Activated naive CD4-positive, alpha-beta T cell treated with anti-CD3 and anti-CD28 coated beads for 36 hours (primary cell): ENCODE measurements at regions of chr11 and their contacts with region 1.

Region 1: GRCh38 chr11:33065445-33066178 is 26.2 kb downstream of the TCP11L1 start:
- DNase-seq: peak; percentile 86
- H3K4me3 Mint-ChIP-seq: no peak overlapping the region
- H3K27ac Mint-ChIP-seq: no peak overlapping the region
- H3K4me1 Mint-ChIP-seq: peaks cover 41% of the 10 kb centered on the region
- H3K27me3 Mint-ChIP-seq: peaks cover 1% of the 10 kb centered on the region

Region 2: GRCh38 chr11:32713496-32713895 is 352.1 kb before region 1 on chr11:
- CTCF ChIA-PET with region 1: interaction called, 4 read pairs
- intact Hi-C with region 1: loop called (anchors 1 kb)
- DNase-seq: peak; percentile 23
- H3K4me3 Mint-ChIP-seq: no peak overlapping the region
- H3K27ac Mint-ChIP-seq: no peak overlapping the region
- H3K4me1 Mint-ChIP-seq: no peaks in the 10 kb centered on the region
- H3K27me3 Mint-ChIP-seq: peaks cover 22% of the 10 kb centered on the region

Region 3: DNA sequence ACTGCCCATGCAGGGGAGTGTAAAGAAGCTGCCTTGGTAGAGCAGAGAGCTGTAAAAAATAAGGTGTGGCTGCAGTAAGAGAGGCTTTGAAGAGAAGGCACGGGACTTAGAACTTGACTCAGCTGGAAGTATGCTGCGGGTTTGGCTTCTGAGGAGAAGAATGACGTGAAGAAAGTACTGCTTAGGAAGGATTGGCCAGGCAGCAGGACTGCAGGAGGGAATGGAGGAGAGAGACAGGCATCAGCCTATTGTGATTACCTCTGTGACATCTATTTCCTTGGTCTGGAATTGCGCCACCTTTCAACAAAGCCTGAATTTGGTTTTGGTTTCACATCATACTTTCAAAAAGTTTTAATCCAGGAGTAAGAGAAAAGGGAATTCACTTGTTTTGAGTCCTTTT is 213.4 kb before region 1 on chr11:
- CTCF ChIA-PET with region 1: no interaction called
- intact Hi-C with region 1: no loop called
- DNase-seq: no peak
- H3K4me3 Mint-ChIP-seq: no peak overlapping the region
- H3K27ac Mint-ChIP-seq: no peak overlapping the region
- H3K4me1 Mint-ChIP-seq: peaks cover 5% of the 10 kb centered on the region
- H3K27me3 Mint-ChIP-seq: peaks cover 7% of the 10 kb centered on the region

Region 4: DNA sequence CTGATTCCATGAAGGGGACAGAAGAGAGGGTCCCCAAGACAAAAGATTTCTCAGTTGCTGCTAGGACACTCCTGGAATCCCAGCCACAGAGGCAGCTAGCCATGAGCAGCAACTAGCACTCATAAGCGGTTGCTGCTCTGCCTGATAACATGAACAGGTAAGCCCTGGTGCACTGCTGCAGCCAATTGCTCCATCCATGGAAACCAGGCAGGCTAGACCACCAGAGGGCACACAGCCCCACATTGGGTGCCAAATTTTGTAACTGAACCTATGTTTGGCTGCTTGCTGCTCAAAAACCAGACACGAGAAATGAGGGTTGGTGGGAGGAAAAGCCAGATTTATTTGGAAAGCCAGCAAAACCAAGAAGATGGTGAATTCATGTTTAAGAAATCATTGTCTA is 194.9 kb before region 1 on chr11:
- CTCF ChIA-PET with region 1: no interaction called
- intact Hi-C with region 1: loop called (anchors 1 kb)
- DNase-seq: peak; percentile 46
- H3K4me3 Mint-ChIP-seq: no peak overlapping the region
- H3K27ac Mint-ChIP-seq: no peak overlapping the region
- H3K4me1 Mint-ChIP-seq: no peaks in the 10 kb centered on the region
- H3K27me3 Mint-ChIP-seq: peaks cover 7% of the 10 kb centered on the region

Region 5: DNA sequence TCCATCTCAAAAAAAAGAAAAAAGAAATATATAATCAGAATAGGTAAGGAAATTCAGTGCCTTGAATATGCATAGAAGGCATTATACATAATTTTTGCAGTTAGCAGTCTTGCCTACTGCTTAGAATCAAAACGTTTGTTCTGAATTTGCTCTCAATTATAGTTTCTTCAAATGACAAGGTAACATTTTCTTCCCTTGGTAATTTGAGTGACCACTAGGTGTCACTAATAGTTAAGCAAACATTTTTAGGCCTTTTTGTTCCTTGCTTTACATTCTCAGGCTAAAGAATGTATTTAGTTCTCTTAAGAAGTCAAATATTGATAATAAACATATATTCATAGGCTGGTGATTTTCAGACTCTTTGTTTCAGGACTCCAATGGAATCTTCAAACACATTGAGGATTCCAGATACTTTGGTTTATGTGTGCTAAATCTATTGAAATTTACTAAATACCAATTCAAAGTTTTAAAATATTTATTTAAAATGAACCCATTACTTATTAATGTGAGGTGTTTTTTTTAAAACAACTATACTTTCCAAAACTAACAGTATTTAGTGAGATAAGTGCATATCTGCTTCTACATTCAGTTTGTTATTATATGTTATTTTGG is 105.0 kb before region 1 on chr11:
- CTCF ChIA-PET with region 1: interaction called, 39 read pairs
- intact Hi-C with region 1: loop called (anchors 1 kb)
- DNase-seq: no peak
- H3K4me3 Mint-ChIP-seq: no peak overlapping the region
- H3K27ac Mint-ChIP-seq: no peak overlapping the region
- H3K4me1 Mint-ChIP-seq: peaks cover 8% of the 10 kb centered on the region
- H3K27me3 Mint-ChIP-seq: no peaks in the 10 kb centered on the region

Region 6: GRCh38 chr11:33039274-33040032 is 26.2 kb before region 1 on chr11 and contains the start of gene TCP11L1:
- CTCF ChIA-PET with region 1: interaction called, 13 read pairs
- intact Hi-C with region 1: loop called (anchors 1 kb)
- DNase-seq: peak; percentile 88
- H3K4me3 Mint-ChIP-seq: peak within 1 kb of the TSS; percentile 85
- H3K27ac Mint-ChIP-seq: peak within 1 kb of the TSS; percentile 92
- H3K4me1 Mint-ChIP-seq: peaks cover 25% of the 10 kb centered on the region
- H3K27me3 Mint-ChIP-seq: no peaks in the 10 kb centered on the region
- total RNA-seq, gene TCP11L1: 4.8 to 5.7 TPM

Region 7: GRCh38 chr11:33329705-33330329 is 264.2 kb after region 1 on chr11:
- CTCF ChIA-PET with region 1: no interaction called
- intact Hi-C with region 1: loop called (anchors 2 kb)
- DNase-seq: peak; percentile 66
- H3K4me3 Mint-ChIP-seq: no peak overlapping the region
- H3K27ac Mint-ChIP-seq: no peak overlapping the region
- H3K4me1 Mint-ChIP-seq: peaks cover 13% of the 10 kb centered on the region
- H3K27me3 Mint-ChIP-seq: no peaks in the 10 kb centered on the region